Activated naive CD4-positive, alpha-beta T cell treated with anti-CD3 and anti-CD28 coated beads, Interleukin-2, amount 10 ng/mL, durations not matched to agents 7 days and 5 days (primary cell): ENCODE measurements at regions of chr18 and their contacts with region 1.

Region 1: GRCh38 chr18:11040823-11041656 is 108.3 kb downstream of the PIEZO2 start:
- DNase-seq: peak; percentile 26
- H3K4me3 Mint-ChIP-seq: no peak overlapping the region
- H3K27ac Mint-ChIP-seq: no peak overlapping the region
- H3K4me1 Mint-ChIP-seq: no peaks in the 10 kb centered on the region
- H3K27me3 Mint-ChIP-seq: peaks cover 4% of the 10 kb centered on the region

Region 2: GRCh38 chr18:10851824-10852319 is 189.2 kb before region 1 on chr18:
- CTCF ChIA-PET with region 1: interaction called, 14 read pairs
- DNase-seq: no peak
- H3K4me3 Mint-ChIP-seq: no peak overlapping the region
- H3K27ac Mint-ChIP-seq: no peak overlapping the region
- H3K4me1 Mint-ChIP-seq: no peaks in the 10 kb centered on the region
- H3K27me3 Mint-ChIP-seq: no peaks in the 10 kb centered on the region

Region 3: DNA sequence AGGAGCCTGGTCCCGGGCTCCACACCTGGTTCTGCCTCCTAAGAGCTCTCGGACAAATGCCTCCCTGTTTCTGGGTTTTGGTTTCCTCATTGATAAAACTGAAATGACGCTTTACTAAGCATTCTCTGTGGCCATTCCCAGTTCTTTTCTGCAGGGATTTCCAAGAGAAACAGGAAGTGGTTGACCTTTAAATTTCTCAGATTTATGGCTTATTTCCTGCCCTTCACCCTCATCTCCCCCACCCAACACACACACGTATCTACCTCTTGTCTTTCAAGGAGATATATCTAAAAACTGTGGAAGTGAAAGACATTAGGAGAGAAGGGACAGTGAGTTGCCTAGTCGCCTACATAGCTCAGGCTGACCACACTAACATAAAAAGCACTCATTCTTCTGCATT is 55.4 kb after region 1 on chr18:
- CTCF ChIA-PET with region 1: no interaction called
- DNase-seq: no peak
- H3K4me3 Mint-ChIP-seq: no peak overlapping the region
- H3K27ac Mint-ChIP-seq: no peak overlapping the region
- H3K4me1 Mint-ChIP-seq: no peaks in the 10 kb centered on the region
- H3K27me3 Mint-ChIP-seq: no peaks in the 10 kb centered on the region

Region 4: DNA sequence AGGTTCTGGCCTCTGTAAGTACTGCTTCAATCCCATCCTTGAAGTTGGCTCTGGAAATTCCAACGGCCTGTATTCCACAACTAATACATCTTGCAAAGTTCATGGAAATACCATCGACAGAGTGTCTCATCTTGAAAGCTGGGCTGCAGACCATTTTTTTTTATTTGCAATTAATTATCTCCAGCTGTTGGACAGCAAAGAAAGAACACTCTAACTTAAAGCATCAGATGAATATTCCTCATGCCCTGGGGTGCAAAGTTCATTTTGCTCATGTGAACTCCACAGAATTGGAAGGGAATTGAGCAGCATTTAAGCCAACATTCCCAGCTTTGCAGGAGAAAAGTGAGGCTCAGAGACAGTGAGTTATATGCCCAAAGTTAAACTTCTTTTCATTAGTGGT is 204.8 kb after region 1 on chr18:
- CTCF ChIA-PET with region 1: no interaction called
- DNase-seq: no peak
- H3K4me3 Mint-ChIP-seq: no peak overlapping the region
- H3K27ac Mint-ChIP-seq: no peak overlapping the region
- H3K4me1 Mint-ChIP-seq: no peaks in the 10 kb centered on the region
- H3K27me3 Mint-ChIP-seq: no peaks in the 10 kb centered on the region